ENCODE measurements at regions of chr4 and their contacts with region 1.

Region 1: DNA sequence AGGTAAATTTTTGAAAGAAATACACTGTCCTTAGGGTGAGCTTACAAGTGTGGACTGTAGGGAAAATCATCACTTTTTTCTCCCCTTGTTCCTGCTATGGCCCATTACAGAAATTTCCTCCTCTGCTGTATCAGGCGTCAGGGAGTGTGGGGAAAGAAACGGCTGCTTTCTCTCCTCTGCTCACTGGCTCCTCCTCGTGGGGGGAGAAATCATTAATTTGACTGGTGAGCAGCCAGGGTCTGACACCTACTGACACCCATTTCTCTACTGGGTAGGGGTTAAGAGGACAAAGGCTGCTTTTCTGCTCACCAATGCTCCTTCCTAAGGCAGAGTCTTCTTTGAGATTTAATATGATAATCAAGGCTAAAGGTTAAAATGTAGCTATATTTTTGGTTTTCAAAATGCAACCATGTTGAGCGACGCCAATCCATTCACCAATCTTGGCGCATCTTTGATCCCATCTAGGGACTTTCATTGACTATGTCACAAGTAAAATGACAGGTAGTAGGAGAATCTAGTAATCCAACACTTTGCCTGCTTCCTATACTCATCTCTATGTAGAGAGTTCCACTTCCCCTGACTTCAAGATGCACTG is 25.1 kb downstream of the SETD7 start:
- DNase-seq: peak; percentile 57
- H3K4me3 Mint-ChIP-seq: no peak overlapping the region
- H3K27ac Mint-ChIP-seq: no peak overlapping the region
- H3K4me1 Mint-ChIP-seq: peaks cover 15% of the 10 kb centered on the region
- H3K27me3 Mint-ChIP-seq: no peaks in the 10 kb centered on the region

Region 2: GRCh38 chr4:139499026-139499585 is 31.8 kb before region 1 on chr4:
- CTCF ChIA-PET with region 1: interaction called, 13 read pairs
- POLR2A ChIA-PET with region 1: no interaction called
- DNase-seq: no peak
- H3K4me3 Mint-ChIP-seq: no peak overlapping the region
- H3K27ac Mint-ChIP-seq: no peak overlapping the region
- H3K4me1 Mint-ChIP-seq: peaks cover 7% of the 10 kb centered on the region
- H3K27me3 Mint-ChIP-seq: no peaks in the 10 kb centered on the region

Measured in activated CD4-positive, alpha-beta memory T cell treated with anti-CD3 and anti-CD28 coated beads, Interleukin-2, amount 10 ng/mL, durations not matched to agents 7 days and 5 days (primary cell).